ENCODE measurements at regions of chr15 and their contacts with region 1.

Region 1: GRCh38 chr15:63752075-63752684 is 81.6 kb downstream of the HERC1 start:
- ATAC-seq: peak in 5 of 8 experiments; percentile 29 to 93 (median 81)
- H3K4me3 ChIP-seq: no peak overlapping the region
- H3K27ac ChIP-seq: peak overlapping the region in 1 of 2 donors; percentile 12
- H3K4me1 ChIP-seq: no peaks in the 10 kb centered on the region

Region 2: DNA sequence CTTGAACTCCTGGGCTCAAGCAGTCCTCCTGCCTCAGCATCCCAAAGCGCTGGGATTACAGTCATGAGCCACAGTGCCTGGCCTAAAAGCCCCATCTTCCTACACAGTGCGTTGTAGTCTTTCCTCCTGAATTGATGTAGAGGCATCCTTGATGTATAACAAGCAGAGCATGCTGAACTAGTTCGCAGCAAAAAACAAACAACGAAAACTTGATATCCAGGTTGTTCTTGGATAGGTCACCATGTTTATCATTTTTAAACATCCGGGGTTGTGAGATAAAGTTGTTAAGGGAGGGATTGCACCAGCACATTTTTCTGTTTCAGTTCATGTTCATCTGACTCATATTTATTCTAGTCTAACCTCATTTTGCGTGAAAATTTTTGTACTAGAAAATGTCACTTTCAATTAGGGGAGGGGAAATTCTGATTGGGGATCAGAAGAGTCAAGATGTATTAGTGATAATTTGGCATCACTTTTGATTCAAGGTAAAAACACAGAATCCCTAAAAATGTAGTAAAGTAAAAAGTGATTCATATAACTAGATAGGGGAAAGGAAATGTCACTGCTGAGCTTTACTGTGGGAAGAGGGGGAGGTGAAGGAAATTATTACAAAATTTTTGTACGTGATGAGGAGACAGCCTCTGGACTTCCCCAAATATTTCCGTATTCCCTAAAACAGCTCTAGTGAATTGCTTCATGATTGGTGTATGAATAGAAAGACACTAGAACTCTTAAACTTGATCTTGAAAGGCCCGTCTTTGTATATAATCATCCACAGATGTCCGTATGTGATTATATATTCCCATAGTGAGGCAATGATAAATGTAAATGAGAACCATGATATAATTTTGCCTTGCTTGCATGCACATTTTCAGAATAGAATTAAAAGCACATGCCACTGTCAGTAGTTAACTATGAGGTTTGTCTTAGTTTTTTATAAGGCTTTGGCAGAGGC is 539.9 kb before region 1 on chr15:
- in situ Hi-C with region 1: no loop called
- ATAC-seq: peak in 3 of 8 experiments; percentile 75 to 95 (median 88)
- H3K4me3 ChIP-seq: no peak overlapping the region
- H3K27ac ChIP-seq: no peak overlapping the region
- H3K4me1 ChIP-seq: peaks cover 0 to 9% of the 10 kb centered on the region in 2 donors

Region 3: DNA sequence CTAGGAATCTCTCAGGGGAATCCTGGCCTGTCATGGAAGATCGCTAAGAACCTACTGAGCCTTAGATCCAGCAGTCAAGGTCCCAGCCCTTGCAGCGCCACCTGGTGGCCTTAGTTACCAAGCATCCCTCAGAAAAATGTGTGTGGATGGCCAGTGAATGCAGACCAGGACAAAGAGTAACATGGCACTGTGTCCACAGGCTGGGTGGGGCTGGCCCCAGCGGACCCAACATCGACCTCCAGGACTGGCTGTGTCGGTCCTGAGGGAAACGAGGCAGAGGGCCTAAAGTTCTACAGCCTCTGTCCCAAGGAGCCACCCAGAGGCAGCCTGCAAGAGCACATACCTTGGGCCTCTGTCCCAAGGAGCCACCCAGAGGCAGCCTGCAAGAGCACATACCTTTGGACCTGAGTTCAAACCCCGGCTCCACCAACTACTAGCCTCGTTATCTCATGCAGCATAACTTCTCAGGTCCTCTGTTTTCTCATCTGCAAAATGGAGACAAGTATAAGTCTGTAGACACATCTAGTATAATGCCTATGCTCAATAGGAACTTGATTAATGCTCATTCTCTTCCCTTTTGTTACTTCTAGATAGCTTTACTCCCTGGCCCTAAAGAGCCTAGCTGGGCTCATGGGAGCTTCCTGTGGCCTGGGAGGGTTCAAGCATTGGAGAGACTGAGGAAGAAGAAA is 139.0 kb after region 1 on chr15:
- in situ Hi-C with region 1: loop called in 3 of 9 experiments (anchors 25 kb)
- ATAC-seq: peak in 5 of 8 experiments; percentile 53 to 96 (median 95)
- H3K4me3 ChIP-seq: no peak overlapping the region
- H3K27ac ChIP-seq: no peak overlapping the region
- H3K4me1 ChIP-seq: peaks cover 7 to 12% of the 10 kb centered on the region in 2 donors

Region 4: GRCh38 chr15:64067564-64068030 is 315.4 kb after region 1 on chr15:
- in situ Hi-C with region 1: loop called in 5 of 9 experiments (anchors 10 to 25 kb)
- ATAC-seq: peak; percentile 23 to 91 (median 76)
- H3K4me3 ChIP-seq: no peak overlapping the region
- H3K27ac ChIP-seq: no peak overlapping the region
- H3K4me1 ChIP-seq: no peaks in the 10 kb centered on the region